Aorta (tissue), 5 donors: ENCODE measurements at regions of chr6 and their contacts with region 1.

Region 1: GRCh38 chr6:54757059-54757458 is 89.5 kb upstream of the FAM83B start:
- DNase-seq: no peak
- ATAC-seq: peak; percentile 22
- H3K4me3 ChIP-seq: no peak overlapping the region
- H3K27ac ChIP-seq: no peak overlapping the region
- H3K4me1 ChIP-seq: no peaks in the 10 kb centered on the region
- H3K27me3 ChIP-seq: no peaks in the 10 kb centered on the region

Region 2: DNA sequence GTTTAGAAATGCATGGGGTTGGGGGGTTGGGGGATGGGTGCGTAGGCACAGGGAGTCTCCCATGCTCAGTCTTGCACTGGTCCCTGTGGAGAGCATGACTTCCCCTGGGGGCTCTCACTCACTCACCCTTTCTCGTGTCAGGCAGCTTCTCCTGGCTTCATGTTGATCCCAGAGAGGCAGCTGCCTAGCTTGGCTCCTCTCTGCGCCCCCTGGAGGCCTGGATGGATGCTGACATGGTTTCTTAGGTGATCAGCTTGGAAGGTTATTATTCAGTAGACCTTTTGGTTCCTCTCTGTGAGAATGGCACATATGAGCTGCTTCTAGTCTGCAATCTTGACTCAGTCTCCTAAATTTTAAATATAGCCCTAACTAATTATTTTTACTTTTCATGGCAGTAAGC is 19.8 kb before region 1 on chr6:
- intact Hi-C with region 1: loop called in 1 of 2 experiments (anchors 2 kb)
- DNase-seq: no peak
- ATAC-seq: no peak
- H3K4me3 ChIP-seq: no peak overlapping the region
- H3K27ac ChIP-seq: no peak overlapping the region
- H3K4me1 ChIP-seq: no peaks in the 10 kb centered on the region
- H3K27me3 ChIP-seq: no peaks in the 10 kb centered on the region